H1 (cell line): ENCODE measurements at regions of chr5 and their contacts with region 1.

Region 1: GRCh38 chr5:111411301-111411700 is 101.0 kb downstream of the STARD4 start:
- DNase-seq: no peak
- H3K4me3 ChIP-seq: no peak overlapping the region
- H3K27ac ChIP-seq: no peak overlapping the region
- H3K4me1 ChIP-seq: no peaks in the 10 kb centered on the region
- H3K27me3 ChIP-seq: no peaks in the 10 kb centered on the region
- CTCF ChIP-seq: no peak
- EP300 ChIP-seq: no peak
- POLR2A ChIP-seq: no peak
- RAD21 ChIP-seq: no peak

Region 2: GRCh38 chr5:111719773-111720172 is 308.5 kb after region 1 on chr5:
- CTCF ChIA-PET with region 1: interaction called, 12 read pairs
- POLR2A ChIA-PET with region 1: no interaction called
- DNase-seq: no peak
- H3K4me3 ChIP-seq: no peak overlapping the region
- H3K27ac ChIP-seq: 0 out of 2 replicates have a peak overlapping the region, but pooled peaks have one; percentile 1
- H3K4me1 ChIP-seq: peaks cover 0 to 9% (median 5%) of the 10 kb centered on the region in 4 experiments; a peak in 4 of 7 replicates
- H3K27me3 ChIP-seq: no peaks in the 10 kb centered on the region
- CTCF ChIP-seq: no peak
- EP300 ChIP-seq: no peak
- POLR2A ChIP-seq: no peak
- RAD21 ChIP-seq: no peak

Region 3: DNA sequence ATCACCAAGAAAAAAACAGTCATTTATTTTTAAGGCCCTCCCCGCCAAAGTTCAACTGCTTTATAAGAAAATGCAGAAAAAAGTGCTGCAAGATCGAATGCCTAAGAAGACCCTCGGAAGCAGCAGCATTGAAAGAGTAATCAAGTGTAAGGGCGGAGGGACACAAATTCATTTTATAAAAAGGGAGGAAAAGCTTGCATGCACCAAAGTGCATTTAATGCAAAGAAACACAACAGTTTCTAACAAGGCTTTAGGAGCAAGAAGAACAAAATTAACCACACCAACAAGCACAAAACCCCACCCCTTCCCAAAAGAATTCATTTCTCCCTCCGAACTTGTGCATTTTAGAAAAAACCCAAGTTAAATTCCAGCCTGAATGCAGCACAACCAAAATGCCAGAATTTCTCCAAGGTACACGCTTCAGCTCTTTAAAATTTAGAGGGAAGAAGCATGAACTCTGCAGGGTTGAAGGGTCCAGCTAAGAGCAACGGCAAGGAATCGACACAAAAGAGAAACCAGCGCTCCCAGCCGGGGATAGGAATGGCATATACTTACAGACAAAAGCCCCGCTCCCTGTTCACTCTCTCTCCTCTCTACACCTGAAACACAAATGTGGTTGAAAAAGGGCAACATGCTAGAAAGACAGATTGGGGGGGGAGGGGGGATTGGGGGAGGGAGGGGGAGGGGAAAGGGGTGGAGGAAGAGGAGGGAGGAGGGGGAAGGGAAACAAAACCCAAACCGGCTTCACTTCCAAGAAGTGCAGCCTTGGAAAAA is 345.5 kb after region 1 on chr5 and contains the start of gene NREP:
- CTCF ChIA-PET with region 1: no interaction called
- POLR2A ChIA-PET with region 1: no interaction called
- DNase-seq: no peak
- H3K4me3 ChIP-seq: peak within 1 kb of the TSS; percentile 81 to 99 (median 84)
- H3K27ac ChIP-seq: peak within 1 kb of the TSS; percentile 94
- H3K4me1 ChIP-seq: peaks cover 0 to 10% (median 3%) of the 10 kb centered on the region in 4 experiments; a peak in 3 of 7 replicates
- H3K27me3 ChIP-seq: no peaks in the 10 kb centered on the region
- CTCF ChIP-seq: no peak
- EP300 ChIP-seq: no peak
- POLR2A ChIP-seq: no peak; a peak in 1 of 3 replicates
- RAD21 ChIP-seq: no peak
- total RNA-seq, gene NREP: 254 and 271 TPM in 2 replicates